ENCODE measurements at regions of chr6 and their contacts with region 1.

Region 1: DNA sequence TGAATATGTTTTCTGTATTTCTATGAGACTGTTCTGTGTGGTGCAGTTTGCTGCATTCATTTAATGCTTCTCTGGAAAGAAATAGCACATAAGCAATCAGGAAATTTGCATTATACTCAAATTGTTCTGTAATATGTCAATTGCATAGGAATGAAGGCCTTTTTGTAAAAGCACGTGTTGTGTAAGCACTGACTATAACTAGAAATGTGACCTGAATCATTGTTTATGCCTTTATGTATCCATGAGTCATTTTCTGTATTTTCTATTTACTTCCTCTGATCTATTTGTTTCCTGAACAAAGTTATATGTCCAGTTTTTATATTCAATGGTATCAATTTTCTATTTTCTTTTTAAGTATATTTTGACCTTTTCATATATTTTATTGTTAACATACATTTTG is 1455.3 kb downstream of the GRIK2 start:
- DNase-seq: no peak
- ATAC-seq: no peak

Region 2: DNA sequence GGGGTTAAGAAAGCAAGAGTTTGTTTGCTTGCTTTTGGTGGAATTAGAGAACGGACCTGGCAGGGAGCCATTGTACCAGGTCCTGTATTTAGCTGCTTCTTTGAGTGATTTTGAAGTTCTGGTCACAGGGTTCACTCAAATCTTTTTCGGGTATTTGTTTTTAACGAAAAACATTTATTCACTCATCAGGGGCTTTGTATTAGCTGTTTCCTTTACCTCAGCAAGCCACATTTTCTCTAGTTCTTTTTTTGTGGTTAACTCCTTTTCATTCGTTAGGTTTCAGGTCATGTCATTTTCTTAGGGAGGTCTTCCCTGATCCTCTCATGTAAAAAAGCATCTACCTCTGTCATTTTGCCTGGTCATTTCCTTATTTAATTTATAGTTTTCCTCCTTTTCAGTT is 46.9 kb after region 1 on chr6:
- intact Hi-C with region 1: no loop called
- DNase-seq: no peak
- ATAC-seq: no peak

Region 3: DNA sequence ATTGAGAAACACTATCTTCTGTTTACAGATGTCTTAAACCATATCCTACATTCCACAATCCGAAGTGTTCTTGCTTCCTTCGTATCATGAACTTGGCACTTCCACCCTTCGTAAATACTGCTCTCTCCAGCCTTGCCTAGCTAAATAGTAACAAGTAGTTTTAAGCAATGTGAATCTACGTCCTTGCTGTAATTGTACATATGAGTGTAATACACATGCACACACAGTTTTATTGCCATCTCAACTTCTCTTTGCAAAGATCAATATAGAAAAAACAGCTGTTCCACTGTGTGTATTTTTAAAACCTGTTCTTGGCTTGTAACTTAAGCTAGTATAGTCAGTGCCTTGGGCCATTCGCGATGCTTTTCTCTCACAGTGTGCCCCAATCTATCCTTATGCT is 69.4 kb after region 1 on chr6:
- intact Hi-C with region 1: no loop called
- DNase-seq: no peak
- ATAC-seq: no peak

Region 4: DNA sequence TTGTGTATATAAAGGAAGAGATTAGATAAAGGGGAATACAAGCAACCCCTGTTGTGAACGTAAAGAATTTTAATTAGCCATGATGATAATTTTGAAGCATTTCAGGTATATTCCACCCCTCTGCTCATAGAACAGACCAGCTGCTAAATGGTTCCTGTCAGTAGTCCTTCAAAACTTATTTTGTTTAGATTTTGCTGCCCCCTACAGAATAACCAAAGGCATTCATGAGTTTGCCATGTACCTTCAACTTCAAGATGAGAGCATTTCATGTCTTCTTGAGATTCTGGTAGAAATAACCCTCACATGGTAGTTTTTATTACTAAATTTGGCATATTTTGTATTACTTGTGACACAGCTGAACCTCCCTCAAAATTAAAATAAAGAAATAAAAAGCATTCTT is 424.3 kb after region 1 on chr6:
- intact Hi-C with region 1: loop called (anchors 2 kb)
- DNase-seq: no peak
- ATAC-seq: no peak

Measured in Right ventricle myocardium superior (tissue), 1 donor.